ENCODE measurements at regions of chr15 and their contacts with region 1.

Region 1: DNA sequence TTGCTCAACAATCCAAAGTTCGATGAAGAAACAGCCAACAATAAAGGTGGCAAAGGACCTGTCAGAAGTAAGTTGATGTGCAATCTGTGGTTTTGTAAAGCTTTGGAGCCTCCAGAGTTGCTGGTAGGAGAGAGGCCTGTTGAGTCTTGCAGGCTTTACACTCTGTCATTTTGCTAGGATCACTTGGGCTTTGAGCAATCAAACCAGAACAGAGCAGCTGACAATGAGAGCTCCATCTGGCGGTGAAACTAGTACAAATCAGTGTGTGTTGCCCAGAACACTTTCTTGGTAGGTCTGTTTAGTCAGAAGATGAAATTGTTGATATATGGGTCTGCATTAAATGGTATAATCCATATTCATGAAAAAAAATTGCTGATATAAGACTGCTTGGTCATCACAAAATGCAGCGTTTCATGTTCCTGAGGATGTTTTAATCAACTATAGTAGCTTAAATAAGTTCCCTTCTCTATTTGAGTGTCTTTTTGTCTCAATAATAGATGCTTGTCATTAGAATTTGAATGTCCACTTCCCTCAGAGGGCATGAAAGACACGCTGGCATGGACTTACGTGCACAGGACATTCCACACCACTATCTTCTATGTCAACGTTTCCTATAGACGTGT is 25.7 kb downstream of the TMOD2 start:
- DNase-seq: peak; percentile 66
- H3K4me3 ChIP-seq: no peak overlapping the region
- H3K27ac ChIP-seq: no peak overlapping the region
- H3K4me1 ChIP-seq: peaks cover 0 to 3% of the 10 kb centered on the region in 2 experiments; a peak in 1 of 4 replicates
- H3K27me3 ChIP-seq: no peaks in the 10 kb centered on the region
- CTCF ChIP-seq: peak; percentile 83
- EP300 ChIP-seq: no peak
- RAD21 ChIP-seq: peak; percentile 77

Region 2: DNA sequence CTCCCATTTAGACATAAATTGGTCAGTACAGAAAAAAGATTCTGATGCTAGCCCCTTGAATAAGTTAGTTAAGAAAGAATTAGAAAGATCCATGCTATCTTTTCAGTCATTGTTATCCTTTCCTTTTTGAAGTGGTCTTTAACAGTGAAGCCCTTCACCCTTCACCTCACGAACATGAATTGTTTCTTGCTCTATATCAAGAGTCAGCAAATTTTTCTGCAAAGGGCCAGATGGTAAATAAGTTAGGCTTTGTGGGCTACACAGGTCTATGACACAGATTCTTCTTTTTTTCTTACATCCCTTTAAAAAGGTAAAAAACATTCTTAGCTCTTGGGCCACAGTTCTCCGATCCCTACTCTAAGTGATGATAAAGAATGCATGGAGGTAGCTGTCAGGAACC is 229.4 kb before region 1 on chr15:
- CTCF ChIA-PET with region 1: interaction called, 10 read pairs
- POLR2A ChIA-PET with region 1: no interaction called
- DNase-seq: no peak
- H3K4me3 ChIP-seq: no peak overlapping the region
- H3K27ac ChIP-seq: no peak overlapping the region
- H3K4me1 ChIP-seq: no peaks in the 10 kb centered on the region; a peak in 1 of 4 replicates
- H3K27me3 ChIP-seq: no peaks in the 10 kb centered on the region
- CTCF ChIP-seq: no peak
- EP300 ChIP-seq: no peak
- RAD21 ChIP-seq: no peak

Region 3: DNA sequence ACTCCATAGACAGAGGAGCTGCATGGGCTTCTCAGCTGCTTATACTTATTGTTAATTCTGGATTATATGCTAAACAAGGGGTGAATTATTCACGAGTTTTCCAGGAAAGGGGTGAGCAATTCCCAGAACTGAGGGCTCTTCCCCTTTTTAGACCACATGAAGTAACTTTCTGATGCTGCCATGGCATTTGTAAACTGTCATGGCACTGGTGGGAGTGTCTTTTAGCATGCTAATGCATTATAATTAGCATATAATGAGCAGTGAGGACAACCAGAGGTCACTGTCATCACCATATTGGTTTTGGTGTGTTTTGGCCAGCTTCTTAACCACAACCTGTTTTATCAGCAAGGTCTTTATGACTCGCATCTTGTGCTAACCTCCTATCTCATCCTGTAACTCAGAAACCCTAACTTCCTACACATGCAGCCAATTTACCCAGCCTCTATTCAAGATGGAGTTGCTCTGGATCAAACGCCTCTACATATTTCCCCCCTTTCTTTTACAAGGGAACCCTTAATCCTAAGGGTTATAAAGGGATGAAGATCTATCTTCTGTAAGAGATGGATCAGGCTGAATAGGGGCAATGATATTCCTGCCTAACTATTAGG is 142.4 kb before region 1 on chr15:
- CTCF ChIA-PET with region 1: interaction called, 16 read pairs
- POLR2A ChIA-PET with region 1: no interaction called
- DNase-seq: no peak
- H3K4me3 ChIP-seq: no peak overlapping the region
- H3K27ac ChIP-seq: no peak overlapping the region
- H3K4me1 ChIP-seq: no peaks in the 10 kb centered on the region
- H3K27me3 ChIP-seq: no peaks in the 10 kb centered on the region
- CTCF ChIP-seq: no peak
- EP300 ChIP-seq: no peak
- RAD21 ChIP-seq: no peak

Region 4: DNA sequence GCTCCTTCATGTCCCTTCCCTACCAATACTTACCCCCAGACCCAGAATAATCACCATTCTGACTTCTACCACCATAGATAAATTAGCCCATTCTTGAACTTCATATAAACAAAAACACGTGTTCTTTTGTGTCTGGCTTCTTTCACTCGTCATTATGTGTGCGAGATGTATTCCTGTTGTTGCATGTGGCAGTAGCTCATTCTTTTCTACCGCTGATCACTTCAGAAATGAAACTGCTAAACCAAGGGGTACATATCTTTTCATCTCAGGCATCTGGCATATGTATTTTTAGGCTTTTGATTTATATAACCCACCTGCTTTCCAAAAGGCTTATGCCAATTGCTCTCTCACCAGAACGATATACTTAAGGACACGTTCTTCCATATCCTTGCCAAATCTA is 109.6 kb before region 1 on chr15:
- CTCF ChIA-PET with region 1: interaction called, 34 read pairs
- POLR2A ChIA-PET with region 1: no interaction called
- DNase-seq: peak; percentile 34
- H3K4me3 ChIP-seq: no peak overlapping the region
- H3K27ac ChIP-seq: peak overlapping the region in 1 of 2 experiments; percentile 29; a peak in 1 of 4 replicates
- H3K4me1 ChIP-seq: peaks cover 0 to 3% of the 10 kb centered on the region in 2 experiments; a peak in 1 of 4 replicates
- H3K27me3 ChIP-seq: no peaks in the 10 kb centered on the region; the same call in 1 of the 2 replicates
- CTCF ChIP-seq: no peak
- EP300 ChIP-seq: peak in 1 of 2 experiments; percentile 76; a peak in 2 of 4 replicates
- RAD21 ChIP-seq: no peak

Region 5: DNA sequence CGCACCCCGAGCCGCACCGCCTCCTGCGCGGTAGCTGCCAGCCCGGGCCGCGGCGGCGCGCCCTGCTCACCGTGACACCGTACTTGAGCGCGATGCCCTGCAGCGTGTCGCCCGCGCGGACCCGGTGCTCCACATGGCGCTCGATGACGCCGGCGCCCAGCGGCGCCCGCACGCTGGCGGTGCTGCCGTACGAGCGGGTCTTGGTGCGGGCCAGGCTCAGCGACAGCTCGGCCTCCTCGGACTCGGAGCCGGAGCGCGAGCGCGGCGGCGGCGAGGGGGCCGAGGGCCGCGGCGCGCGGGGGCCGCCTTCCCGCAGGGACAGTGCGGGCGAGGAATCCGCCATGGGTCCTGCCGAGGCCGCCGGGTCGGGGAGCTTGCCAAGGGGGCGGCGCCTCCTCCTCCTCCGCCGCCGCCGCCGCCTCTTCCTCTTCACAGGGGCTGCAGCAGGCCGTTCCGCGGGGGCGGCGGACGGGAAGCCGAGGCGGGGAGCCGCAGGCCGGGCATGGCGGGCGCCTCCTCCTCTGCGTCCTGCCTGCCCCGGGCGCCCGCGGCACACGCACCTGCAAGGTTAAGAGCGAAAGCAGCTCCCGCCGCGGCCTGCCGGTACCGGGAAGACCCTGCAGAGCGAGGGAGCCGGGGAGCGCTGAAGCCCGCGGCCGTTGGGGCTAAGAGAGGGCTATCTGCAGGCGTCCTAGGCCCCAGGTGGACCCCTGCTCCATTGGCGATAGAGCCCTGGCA is 39.6 kb before region 1 on chr15 and contains the start of gene LYSMD2:
- CTCF ChIA-PET with region 1: interaction called, 130 read pairs
- POLR2A ChIA-PET with region 1: no interaction called
- DNase-seq: peak; percentile 87
- H3K4me3 ChIP-seq: peak within 1 kb of the TSS; percentile 65 to 74
- H3K27ac ChIP-seq: peak within 1 kb of the TSS in 1 of 2 experiments; percentile 87; a peak in 2 of 4 replicates
- H3K4me1 ChIP-seq: peaks cover 0 to 23% of the 10 kb centered on the region in 2 experiments; a peak in 2 of 4 replicates
- H3K27me3 ChIP-seq: no peaks in the 10 kb centered on the region
- CTCF ChIP-seq: no peak
- EP300 ChIP-seq: no peak
- RAD21 ChIP-seq: no peak
- polyA plus RNA-seq, gene LYSMD2: 10.3 and 14.2 TPM in 2 replicates

Region 6: GRCh38 chr15:51801391-51801835 is 24.4 kb after region 1 on chr15:
- CTCF ChIA-PET with region 1: interaction called, 11 read pairs
- POLR2A ChIA-PET with region 1: no interaction called
- DNase-seq: peak; percentile 70
- H3K4me3 ChIP-seq: peak overlapping the region in 1 of 2 experiments; percentile 25; a peak in 1 of 4 replicates
- H3K27ac ChIP-seq: peak overlapping the region in 1 of 2 experiments; percentile 3; a peak in 1 of 4 replicates
- H3K4me1 ChIP-seq: peaks cover 0 to 20% of the 10 kb centered on the region in 2 experiments; a peak in 2 of 4 replicates
- H3K27me3 ChIP-seq: no peaks in the 10 kb centered on the region
- CTCF ChIP-seq: peak; percentile 70
- EP300 ChIP-seq: peak in 1 of 2 experiments; percentile 76; a peak in 1 of 4 replicates
- RAD21 ChIP-seq: peak; percentile 40

Region 7: GRCh38 chr15:53059273-53060043 is 1282.4 kb after region 1 on chr15:
- CTCF ChIA-PET with region 1: no interaction called
- POLR2A ChIA-PET with region 1: no interaction called
- DNase-seq: no peak
- H3K4me3 ChIP-seq: no peak overlapping the region
- H3K27ac ChIP-seq: no peak overlapping the region
- H3K4me1 ChIP-seq: no peaks in the 10 kb centered on the region
- H3K27me3 ChIP-seq: no peaks in the 10 kb centered on the region
- CTCF ChIP-seq: no peak
- EP300 ChIP-seq: no peak
- RAD21 ChIP-seq: no peak